Esophagus muscularis mucosa (tissue), 4 donors: ENCODE measurements at regions of chr22 and their contacts with region 1.

Region 1: DNA sequence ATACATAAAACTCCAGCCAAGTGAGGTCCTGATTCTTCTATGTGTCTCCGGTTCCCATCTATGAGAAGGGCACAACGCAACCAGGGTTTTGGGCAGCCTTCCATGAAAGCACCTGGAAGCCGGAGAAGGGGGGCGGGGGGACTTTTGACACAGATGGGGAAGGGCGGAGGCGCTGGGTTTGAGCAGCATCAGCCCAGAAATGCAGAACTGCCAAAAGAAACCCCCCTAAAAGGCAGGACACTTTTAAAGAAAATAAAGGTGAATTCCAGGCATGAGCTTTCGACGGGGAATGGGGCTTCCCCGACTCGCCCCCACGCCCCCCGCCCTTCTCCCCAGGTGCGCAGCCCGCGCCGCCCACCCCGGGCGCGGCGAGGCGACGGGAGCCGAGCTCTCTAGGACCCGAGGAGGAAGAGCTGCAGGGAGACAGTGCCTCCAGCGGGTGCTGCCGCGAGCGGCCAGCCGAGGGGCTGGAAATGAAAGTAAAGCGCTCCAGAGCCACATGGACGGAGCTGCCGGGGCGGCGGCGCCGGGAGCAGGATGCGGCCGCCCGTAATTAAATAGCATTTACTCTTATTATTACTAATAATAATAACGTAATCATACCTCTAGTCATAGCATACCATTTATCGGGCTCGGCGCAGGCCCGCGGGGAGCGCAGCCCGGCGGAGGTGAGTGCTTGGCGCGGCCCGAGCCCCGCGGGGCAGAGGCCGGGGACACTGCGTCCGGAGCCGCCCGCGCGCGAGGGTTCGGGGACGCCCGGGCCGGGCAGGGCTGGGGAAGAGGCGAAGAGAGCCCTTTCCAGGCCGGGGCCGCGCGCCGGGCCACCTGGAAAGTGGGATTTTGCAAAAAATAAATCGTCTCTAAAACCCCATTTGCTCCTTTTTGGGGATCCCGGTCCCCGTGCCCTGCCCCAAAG is at the start of gene ZC3H7B:
- DNase-seq: no peak
- H3K4me3 ChIP-seq: peak within 1 kb of the TSS; percentile 73 to 99 (median 92)
- H3K27ac ChIP-seq: peak within 1 kb of the TSS; percentile 88 to 93 (median 88)
- H3K4me1 ChIP-seq: peaks cover 12 to 44% (median 40%) of the 10 kb centered on the region in 4 donors
- H3K27me3 ChIP-seq: no peaks in the 10 kb centered on the region
- CTCF ChIP-seq: peak; percentile 42 to 76 (median 50)
- EP300 ChIP-seq: no peak
- POLR2A ChIP-seq: no peak
- total RNA-seq, gene ZC3H7B: 39.9 to 72.2 (median 54.3) TPM

Region 2: GRCh38 chr22:41197038-41197972 is 104.1 kb before region 1 on chr22:
- intact Hi-C with region 1: loop called (anchors 5 kb)
- DNase-seq: peak; percentile 94
- H3K4me3 ChIP-seq: peak overlapping the region; percentile 74 to 81 (median 79)
- H3K27ac ChIP-seq: peak overlapping the region; percentile 57 to 70 (median 65)
- H3K4me1 ChIP-seq: peaks cover 10 to 21% (median 18%) of the 10 kb centered on the region in 4 donors
- H3K27me3 ChIP-seq: no peaks in the 10 kb centered on the region
- CTCF ChIP-seq: peak in 2 of 3 experiments; percentile 12 to 21
- EP300 ChIP-seq: no peak
- POLR2A ChIP-seq: no peak

Region 3: GRCh38 chr22:41367039-41367679 is 65.8 kb after region 1 on chr22:
- intact Hi-C with region 1: loop called (anchors 5 kb)
- DNase-seq: peak; percentile 98
- H3K4me3 ChIP-seq: peak overlapping the region; percentile 56 to 65 (median 63)
- H3K27ac ChIP-seq: peak overlapping the region; percentile 80 to 87 (median 84)
- H3K4me1 ChIP-seq: peaks cover 33 to 61% (median 57%) of the 10 kb centered on the region in 4 donors
- H3K27me3 ChIP-seq: no peaks in the 10 kb centered on the region
- CTCF ChIP-seq: peak in 1 of 3 experiments; percentile 45
- EP300 ChIP-seq: no peak
- POLR2A ChIP-seq: no peak

Region 4: DNA sequence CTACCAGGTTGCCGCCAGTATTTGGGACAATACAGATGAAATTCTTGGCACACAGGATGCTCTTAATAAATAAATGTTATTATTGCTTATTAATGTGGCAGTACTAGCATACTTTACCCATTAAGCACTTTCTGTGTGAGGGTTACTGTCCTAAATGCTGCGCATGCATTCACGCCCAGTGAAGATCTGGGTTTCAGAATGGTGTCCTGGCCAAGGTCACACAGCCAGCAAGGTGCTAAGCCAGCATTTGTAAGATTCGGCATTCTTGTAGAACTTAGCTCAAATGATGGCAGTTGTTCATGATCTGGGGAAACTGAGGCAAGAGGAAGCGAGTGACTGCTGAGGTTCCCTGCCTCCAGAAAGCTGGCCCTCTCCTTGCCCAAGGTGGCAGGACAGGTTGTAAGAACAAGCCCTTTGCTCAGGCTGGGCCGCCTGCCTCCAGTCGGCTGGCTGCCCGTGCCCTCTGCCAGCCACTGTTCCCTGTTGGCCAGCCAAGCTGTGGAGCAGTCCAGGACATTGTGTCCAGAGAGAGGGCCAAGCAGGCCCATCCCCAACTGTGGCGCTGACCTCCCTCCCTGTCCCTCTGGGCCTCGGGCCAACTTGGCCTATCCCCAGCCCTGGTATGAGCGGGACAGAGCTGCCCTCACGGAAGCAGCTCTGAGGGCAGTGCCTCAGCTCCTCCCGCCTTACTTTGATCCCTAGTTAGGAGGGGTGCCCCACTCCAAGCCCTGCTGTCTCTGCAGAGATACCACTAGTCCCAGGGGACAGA is 116.4 kb after region 1 on chr22:
- intact Hi-C with region 1: no loop called
- DNase-seq: no peak
- H3K4me3 ChIP-seq: peak overlapping the region in 3 of 4 donors; percentile 0 to 30 (median 10)
- H3K27ac ChIP-seq: peak overlapping the region; percentile 93 to 100 (median 99)
- H3K4me1 ChIP-seq: peaks cover 49 to 69% (median 63%) of the 10 kb centered on the region in 4 donors
- H3K27me3 ChIP-seq: no peaks in the 10 kb centered on the region
- CTCF ChIP-seq: no peak
- EP300 ChIP-seq: peak; percentile 98
- POLR2A ChIP-seq: no peak

Region 5: DNA sequence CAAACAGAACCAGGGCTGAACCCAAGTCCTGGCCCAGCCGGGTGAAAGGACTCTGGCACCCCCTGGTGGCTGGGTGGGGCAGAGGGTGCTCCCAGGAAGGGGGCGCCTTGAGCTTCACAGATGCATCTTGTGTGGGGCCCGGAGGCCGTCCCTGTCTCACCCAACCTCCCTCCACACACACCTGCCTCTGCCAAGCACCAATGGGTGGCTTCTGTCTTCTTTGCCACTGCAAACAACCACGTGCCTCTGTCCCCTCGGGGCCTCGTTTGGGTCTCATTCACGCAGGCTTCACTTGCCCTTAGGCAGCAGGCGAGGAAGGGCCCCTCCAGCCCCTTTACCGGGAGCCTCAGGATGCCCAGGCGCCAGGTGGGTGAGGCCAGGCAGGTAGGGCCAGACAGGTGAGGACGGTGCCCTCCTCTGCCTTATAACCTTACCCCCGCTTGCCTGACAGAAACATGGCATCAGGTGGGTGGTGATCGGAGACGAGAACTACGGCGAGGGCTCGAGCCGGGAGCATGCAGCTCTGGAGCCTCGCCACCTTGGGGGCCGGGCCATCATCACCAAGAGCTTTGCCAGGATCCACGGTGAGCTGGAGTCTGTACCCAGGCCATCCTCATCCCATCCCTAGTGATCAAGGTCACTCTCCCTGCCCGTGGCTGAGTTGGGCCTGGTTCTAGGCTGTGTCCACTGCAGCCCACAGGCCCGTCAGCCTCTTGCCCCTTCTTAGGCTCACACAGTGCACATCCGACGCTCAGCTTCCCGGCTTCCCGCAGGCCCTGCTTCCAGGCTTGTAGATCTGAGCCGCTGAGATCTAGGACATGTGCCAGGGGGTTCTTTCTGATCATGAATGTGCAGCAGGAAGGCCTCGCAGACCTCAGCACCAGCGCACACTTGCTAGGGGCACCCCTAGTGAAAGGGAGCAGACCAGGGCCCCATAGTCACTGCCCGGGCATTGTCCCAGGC is 225.8 kb after region 1 on chr22:
- intact Hi-C with region 1: loop called (anchors 10 kb)
- DNase-seq: no peak
- H3K4me3 ChIP-seq: no peak overlapping the region
- H3K27ac ChIP-seq: peak overlapping the region; percentile 90 to 93 (median 92)
- H3K4me1 ChIP-seq: peaks cover 49 to 54% (median 51%) of the 10 kb centered on the region in 4 donors
- H3K27me3 ChIP-seq: no peaks in the 10 kb centered on the region
- CTCF ChIP-seq: peak; percentile 90
- EP300 ChIP-seq: no peak
- POLR2A ChIP-seq: no peak